ENCODE measurements at regions of chr3 and their contacts with region 1.

Region 1: DNA sequence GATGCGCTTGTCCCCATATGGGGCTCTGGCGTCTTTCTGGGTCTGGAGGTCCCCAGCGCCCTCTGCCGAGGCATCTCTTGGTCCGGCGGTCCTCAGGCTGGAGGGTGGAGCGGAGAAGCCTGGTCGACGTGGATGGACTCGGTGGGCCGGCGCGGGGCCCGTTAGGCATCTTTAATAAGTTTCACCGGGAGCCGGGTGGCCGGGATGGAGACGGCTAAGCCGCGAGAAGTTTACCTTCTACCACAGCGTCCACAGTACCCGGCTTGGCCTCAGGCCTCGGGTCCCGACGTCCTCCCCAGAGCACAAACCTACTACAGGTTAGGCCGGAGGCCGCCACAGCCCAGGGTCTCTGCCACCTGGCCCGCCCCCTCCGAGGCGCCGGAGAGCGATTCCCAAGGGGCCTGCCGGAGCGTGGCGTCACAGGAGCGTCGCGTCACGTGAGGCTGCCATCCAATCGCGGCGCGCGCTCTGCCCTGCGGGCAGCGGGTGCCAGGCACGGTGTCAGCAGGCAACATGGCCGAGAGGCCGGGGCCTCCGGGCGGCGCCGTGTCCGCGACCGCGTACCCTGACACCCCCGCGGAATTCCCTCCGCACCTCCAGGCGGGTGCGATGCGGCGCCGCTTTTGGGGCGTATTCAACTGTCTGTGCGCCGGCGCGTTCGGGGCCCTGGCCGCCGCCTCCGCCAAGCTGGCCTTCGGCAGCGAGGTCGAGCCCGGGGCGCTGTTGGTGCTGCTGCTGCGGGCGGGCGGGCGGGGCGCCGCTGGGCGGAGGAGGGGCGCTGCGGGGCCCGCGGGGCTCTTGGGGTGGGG is at the start of gene TMEM42:
- DNase-seq: peak; percentile 90
- H3K4me3 ChIP-seq: peak within 1 kb of the TSS; percentile 47 to 92 (median 86)
- H3K27ac ChIP-seq: peak within 1 kb of the TSS; percentile 87 to 95 (median 94)
- H3K4me1 ChIP-seq: peaks cover 7 to 13% (median 8%) of the 10 kb centered on the region in 4 donors
- H3K27me3 ChIP-seq: no peaks in the 10 kb centered on the region
- CTCF ChIP-seq: peak in 4 of 5 experiments; percentile 7 to 20 (median 13)
- EP300 ChIP-seq: no peak
- POLR2A ChIP-seq: peak; percentile 80
- total RNA-seq, gene TMEM42: 10.0 to 13.7 (median 12.3) TPM in 3 of 4 donors, not detected in the other

Region 2: DNA sequence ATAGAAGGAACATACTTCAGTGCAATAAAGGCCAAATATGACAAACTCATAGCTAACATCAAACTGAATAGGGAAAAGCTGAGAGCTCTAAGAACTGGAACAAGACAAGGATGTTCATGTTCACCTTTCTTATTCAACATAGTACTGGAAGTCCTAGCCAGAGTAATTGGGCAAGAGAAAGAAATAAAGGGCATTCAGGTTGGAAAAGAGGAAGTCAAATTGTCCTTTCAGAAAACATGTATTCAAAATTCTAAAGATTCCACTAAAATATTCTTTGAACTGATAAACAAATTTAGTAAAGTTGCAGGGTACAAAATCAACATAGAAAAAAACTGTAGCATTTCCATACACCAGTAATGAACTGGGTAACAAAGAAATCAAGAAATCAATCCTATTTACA is 248.9 kb before region 1 on chr3:
- in situ Hi-C with region 1: no loop called
- intact Hi-C with region 1: loop called (anchors 5 kb)
- DNase-seq: no peak
- H3K4me3 ChIP-seq: no peak overlapping the region
- H3K27ac ChIP-seq: no peak overlapping the region
- H3K4me1 ChIP-seq: no peaks in the 10 kb centered on the region
- H3K27me3 ChIP-seq: no peaks in the 10 kb centered on the region
- CTCF ChIP-seq: no peak
- EP300 ChIP-seq: no peak
- POLR2A ChIP-seq: no peak

Region 3: DNA sequence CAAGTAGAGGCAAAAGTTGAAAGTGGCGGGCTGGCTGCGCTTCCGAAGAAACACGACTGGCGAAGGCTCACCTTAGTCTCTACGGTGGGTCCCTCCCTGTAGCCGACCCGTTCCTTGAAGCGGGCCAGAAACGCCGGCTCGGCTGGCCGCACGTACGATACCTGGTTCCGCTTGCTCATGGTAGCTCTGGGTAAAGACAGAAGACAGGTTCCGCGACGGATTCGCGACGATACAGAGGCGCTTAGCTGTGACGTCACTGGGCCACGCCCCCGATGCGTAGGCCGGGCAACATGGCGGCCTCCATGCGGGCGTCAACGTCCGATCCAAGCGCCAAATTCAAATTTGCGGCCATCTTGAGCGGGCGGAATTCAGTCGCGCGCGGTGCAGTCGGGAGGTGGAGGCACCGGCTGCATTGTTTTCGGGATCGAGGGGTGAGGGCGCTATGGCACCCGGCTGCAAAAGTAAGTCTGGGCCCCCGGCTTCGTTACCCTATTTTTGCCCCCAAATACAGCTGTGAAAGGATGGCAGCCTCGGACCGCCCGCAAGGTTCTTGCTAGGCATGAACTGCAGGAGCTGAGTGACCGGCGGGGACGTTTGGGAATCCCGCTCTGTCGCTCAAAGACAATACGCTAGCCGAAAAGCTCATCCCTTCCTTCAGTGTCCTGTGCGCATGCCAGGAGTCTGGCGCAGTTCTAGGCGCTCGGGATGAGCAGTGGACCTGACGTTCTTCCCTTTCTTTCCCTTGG is 100.0 kb before region 1 on chr3 and contains the starts of genes KIAA1143 and KIF15:
- in situ Hi-C with region 1: no loop called
- intact Hi-C with region 1: loop called (anchors 10 kb)
- DNase-seq: peak; percentile 98
- H3K4me3 ChIP-seq: peak within 1 kb of the TSS; percentile 61 to 95 (median 77)
- H3K27ac ChIP-seq: peak within 1 kb of the TSS; percentile 76 to 79 (median 78)
- H3K4me1 ChIP-seq: peaks cover 4 to 19% (median 13%) of the 10 kb centered on the region in 4 donors
- H3K27me3 ChIP-seq: no peaks in the 10 kb centered on the region
- CTCF ChIP-seq: no peak
- EP300 ChIP-seq: no peak
- POLR2A ChIP-seq: peak; percentile 67
- total RNA-seq, gene KIAA1143: 5.6 to 18.3 (median 13.7) TPM
- total RNA-seq, gene KIF15: 0.95 to 11.5 (median 0.96) TPM in 3 of 4 donors, not detected in the other